ENCODE measurements at regions of chr1 and their contacts with region 1.

Region 1: DNA sequence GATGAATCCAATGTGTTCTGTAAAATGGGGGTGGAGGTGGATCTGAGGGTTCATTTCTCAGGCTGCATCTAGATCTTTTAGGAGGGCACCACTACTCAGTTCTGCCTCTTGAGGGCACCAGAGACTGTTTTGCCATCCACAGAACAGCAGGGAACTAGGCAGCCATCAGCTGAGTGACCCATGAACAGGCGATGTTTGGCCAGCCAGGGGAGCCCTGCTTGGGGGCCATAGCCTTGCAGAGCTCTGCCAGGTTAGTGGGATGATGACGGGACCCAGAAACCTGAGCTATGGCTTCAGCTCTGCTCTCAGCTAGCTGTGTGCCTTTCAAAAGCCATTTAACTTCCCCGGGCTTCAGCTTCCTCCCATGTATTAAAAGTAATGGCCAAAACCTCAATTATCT is 13.4 kb upstream of the NOS1AP start:
- DNase-seq: peak; percentile 85
- H3K4me3 Mint-ChIP-seq: no peak overlapping the region
- H3K27ac Mint-ChIP-seq: no peak overlapping the region
- H3K4me1 Mint-ChIP-seq: peaks cover 14% of the 10 kb centered on the region
- H3K27me3 Mint-ChIP-seq: no peaks in the 10 kb centered on the region
- CTCF ChIP-seq: peak; percentile 99

Region 2: DNA sequence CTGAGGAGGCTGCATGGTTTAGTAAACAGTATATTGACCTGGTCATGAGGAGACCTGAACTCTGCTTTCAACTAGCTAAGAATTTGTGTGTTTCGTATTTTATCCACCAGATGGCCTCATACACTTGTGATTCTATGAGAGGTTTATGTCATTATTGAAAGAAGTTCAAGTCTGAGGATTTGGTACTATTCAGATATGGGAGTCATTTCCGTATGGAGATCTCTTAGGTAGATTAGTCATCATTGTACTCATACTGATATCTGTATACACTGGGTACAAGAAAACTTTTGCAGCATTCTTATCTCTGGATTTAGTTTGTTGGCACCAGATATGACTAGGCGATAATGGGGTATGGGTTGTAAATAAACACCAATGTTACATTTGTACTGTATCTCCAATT is 263.3 kb before region 1 on chr1:
- CTCF ChIA-PET with region 1: interaction called, 12 read pairs
- POLR2A ChIA-PET with region 1: no interaction called
- intact Hi-C with region 1: no loop called
- DNase-seq: peak; percentile 87
- H3K4me3 Mint-ChIP-seq: no peak overlapping the region
- H3K27ac Mint-ChIP-seq: no peak overlapping the region
- H3K4me1 Mint-ChIP-seq: peaks cover 18% of the 10 kb centered on the region
- H3K27me3 Mint-ChIP-seq: no peaks in the 10 kb centered on the region
- CTCF ChIP-seq: peak; percentile 71

Region 3: GRCh38 chr1:161978011-161978790 is 77.8 kb before region 1 on chr1:
- CTCF ChIA-PET with region 1: no interaction called
- POLR2A ChIA-PET with region 1: no interaction called
- intact Hi-C with region 1: no loop called
- DNase-seq: no peak
- H3K4me3 Mint-ChIP-seq: no peak overlapping the region
- H3K27ac Mint-ChIP-seq: no peak overlapping the region
- H3K4me1 Mint-ChIP-seq: no peaks in the 10 kb centered on the region
- H3K27me3 Mint-ChIP-seq: peaks cover 77% of the 10 kb centered on the region
- CTCF ChIP-seq: no peak

Region 4: DNA sequence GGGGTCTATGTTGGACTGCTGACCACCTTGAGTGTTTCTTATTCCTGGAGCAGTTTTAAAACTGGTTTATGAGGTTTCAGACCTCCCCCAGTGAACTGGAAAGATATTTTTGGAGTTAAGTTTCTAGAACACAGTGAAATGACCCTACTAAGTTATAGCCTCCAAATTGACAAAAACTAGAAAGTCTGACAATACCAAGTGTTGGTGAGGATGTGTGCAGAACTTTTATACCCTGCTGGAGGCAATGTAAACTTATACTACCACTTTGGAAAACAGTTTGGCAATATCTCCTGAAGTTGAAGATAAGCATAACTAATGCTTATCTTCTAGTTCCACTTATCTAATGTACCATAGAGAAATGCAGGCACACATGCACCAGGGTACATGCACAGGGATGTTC is 42.8 kb before region 1 on chr1:
- CTCF ChIA-PET with region 1: no interaction called
- POLR2A ChIA-PET with region 1: no interaction called
- intact Hi-C with region 1: no loop called
- DNase-seq: no peak
- H3K4me3 Mint-ChIP-seq: no peak overlapping the region
- H3K27ac Mint-ChIP-seq: no peak overlapping the region
- H3K4me1 Mint-ChIP-seq: no peaks in the 10 kb centered on the region
- H3K27me3 Mint-ChIP-seq: peaks cover 36% of the 10 kb centered on the region
- CTCF ChIP-seq: no peak

Region 5: GRCh38 chr1:162213281-162213912 is 157.4 kb after region 1 on chr1:
- CTCF ChIA-PET with region 1: interaction called, 15 read pairs
- POLR2A ChIA-PET with region 1: no interaction called
- intact Hi-C with region 1: no loop called
- DNase-seq: peak; percentile 62
- H3K4me3 Mint-ChIP-seq: no peak overlapping the region
- H3K27ac Mint-ChIP-seq: no peak overlapping the region
- H3K4me1 Mint-ChIP-seq: peaks cover 24% of the 10 kb centered on the region
- H3K27me3 Mint-ChIP-seq: no peaks in the 10 kb centered on the region
- CTCF ChIP-seq: no peak

Region 6: GRCh38 chr1:162276493-162276892 is 220.4 kb after region 1 on chr1:
- CTCF ChIA-PET with region 1: interaction called, 130 read pairs
- POLR2A ChIA-PET with region 1: interaction called, 5 read pairs
- intact Hi-C with region 1: loop called (anchors 1 kb)
- DNase-seq: peak; percentile 66
- H3K4me3 Mint-ChIP-seq: no peak overlapping the region
- H3K27ac Mint-ChIP-seq: no peak overlapping the region
- H3K4me1 Mint-ChIP-seq: peaks cover 7% of the 10 kb centered on the region
- H3K27me3 Mint-ChIP-seq: no peaks in the 10 kb centered on the region
- CTCF ChIP-seq: peak; percentile 64

Region 7: DNA sequence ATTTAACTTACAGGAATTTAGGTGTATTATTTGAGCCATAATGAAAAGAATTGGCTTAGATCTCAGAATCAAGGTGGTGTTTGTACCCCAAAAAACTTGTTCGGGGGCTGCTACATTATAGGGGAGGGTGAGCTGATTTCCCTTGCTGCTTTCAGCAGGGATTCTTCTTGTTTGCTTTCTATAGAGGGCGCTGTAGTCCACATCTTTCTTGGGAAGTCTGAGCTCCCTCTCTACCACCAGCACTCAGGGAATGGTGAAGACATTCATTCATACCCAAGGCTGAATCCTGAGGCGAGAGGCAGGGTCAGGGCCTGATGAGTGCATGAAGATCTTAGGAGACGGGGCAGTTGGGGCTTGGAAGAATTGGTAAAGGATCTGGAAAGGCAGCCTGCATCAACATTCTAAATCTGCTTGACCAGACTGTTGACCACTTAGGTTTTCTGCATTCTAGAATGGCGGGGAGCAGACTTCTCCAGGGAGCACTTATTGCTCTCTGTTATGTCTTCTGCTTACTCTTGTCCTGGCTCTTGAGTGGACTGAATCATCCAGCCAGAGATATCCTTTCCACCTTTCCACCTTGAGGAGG is 301.7 kb after region 1 on chr1:
- CTCF ChIA-PET with region 1: interaction called, 15 read pairs
- POLR2A ChIA-PET with region 1: no interaction called
- intact Hi-C with region 1: loop called (anchors 1 kb)
- DNase-seq: peak; percentile 80
- H3K4me3 Mint-ChIP-seq: no peak overlapping the region
- H3K27ac Mint-ChIP-seq: no peak overlapping the region
- H3K4me1 Mint-ChIP-seq: peaks cover 8% of the 10 kb centered on the region
- H3K27me3 Mint-ChIP-seq: no peaks in the 10 kb centered on the region
- CTCF ChIP-seq: peak; percentile 83

Region 8: DNA sequence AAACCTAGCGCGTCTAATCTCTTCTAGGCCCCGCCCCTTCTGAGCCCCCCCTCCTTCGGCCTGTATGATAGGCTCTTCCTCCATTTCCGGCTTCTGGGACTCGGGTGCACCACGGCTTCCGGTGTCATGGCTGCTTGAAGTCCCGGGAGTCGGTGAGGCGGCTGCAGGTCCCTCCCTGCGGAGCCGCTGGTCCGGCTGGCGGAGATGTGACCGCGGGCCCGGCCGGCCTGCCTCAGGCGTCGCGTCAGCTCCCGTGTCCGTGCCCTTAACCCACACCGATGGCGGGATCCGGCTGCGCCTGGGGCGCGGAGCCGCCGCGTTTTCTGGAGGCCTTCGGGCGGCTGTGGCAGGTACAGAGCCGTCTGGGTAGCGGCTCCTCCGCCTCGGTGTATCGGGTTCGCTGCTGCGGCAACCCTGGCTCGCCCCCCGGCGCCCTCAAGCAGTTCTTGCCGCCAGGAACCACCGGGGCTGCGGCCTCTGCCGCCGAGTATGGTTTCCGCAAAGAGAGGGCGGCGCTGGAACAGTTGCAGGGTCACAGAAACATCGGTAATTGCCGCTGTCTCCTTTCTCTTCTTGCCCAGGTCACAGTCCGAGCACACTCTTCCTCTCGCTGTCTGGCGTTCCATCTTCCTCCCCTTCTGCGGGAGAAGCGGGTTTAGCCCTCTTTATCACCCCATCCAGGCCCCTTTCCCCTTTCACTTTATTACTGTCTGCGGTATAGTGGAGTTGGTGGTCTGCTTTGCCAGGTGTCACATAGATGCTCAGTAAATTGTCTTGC is 441.9 kb after region 1 on chr1 and contains the start of gene UHMK1:
- CTCF ChIA-PET with region 1: interaction called, 7 read pairs
- POLR2A ChIA-PET with region 1: interaction called, 3 read pairs
- intact Hi-C with region 1: loop called (anchors 2 kb)
- DNase-seq: peak; percentile 97
- H3K4me3 Mint-ChIP-seq: peak within 1 kb of the TSS; percentile 91
- H3K27ac Mint-ChIP-seq: peak within 1 kb of the TSS; percentile 82
- H3K4me1 Mint-ChIP-seq: peaks cover 12% of the 10 kb centered on the region
- H3K27me3 Mint-ChIP-seq: peaks cover 8% of the 10 kb centered on the region
- CTCF ChIP-seq: no peak
- total RNA-seq, gene UHMK1: 76.9 and 102 TPM in 2 replicates

Measured in MCF 10A (cell line).